Testis (tissue), 5 donors: ENCODE measurements at regions of chr17 and their contacts with region 1.

Region 1: DNA sequence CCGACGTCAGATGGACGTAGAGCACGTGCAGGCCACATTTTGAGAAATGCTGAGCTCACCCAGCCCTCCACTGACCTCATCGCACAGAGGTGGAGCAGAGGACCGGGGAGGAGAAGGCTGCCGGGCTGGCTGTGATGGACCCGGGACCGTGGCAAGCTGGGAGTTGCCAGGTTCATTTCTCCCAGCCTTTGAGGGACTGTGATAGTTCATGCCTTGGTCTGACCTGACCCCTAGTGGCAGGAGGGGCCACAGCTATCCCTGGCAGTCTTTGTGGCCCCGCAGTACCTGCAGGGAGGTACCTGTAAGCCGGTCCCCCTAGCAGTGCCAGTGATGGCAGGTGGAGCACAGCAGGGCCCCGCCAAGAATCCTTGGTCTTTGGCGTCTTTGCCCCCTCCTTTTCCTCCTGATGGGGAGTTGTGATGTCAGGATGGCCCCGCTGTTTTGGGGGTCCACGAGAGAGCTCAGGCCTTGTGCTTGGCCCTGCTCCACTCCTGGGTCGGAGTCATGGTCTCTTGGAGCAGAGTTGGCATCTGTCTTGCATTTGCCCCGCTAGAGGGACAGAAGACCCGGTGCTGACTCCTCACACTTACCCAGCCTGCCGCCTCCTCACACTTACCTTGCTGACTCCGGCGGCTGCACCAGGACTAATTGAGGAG is 50.4 kb downstream of the OR1D5 start:
- DNase-seq: peak; percentile 74
- H3K4me3 ChIP-seq: no peak overlapping the region
- H3K27ac ChIP-seq: no peak overlapping the region
- H3K4me1 ChIP-seq: no peaks in the 10 kb centered on the region
- H3K27me3 ChIP-seq: no peaks in the 10 kb centered on the region
- CTCF ChIP-seq: peak; percentile 52 to 68 (median 61)
- POLR2A ChIP-seq: no peak

Region 2: GRCh38 chr17:2828397-2829038 is 184.5 kb before region 1 on chr17:
- intact Hi-C with region 1: loop called (anchors 5 kb)
- DNase-seq: peak; percentile 73
- H3K4me3 ChIP-seq: no peak overlapping the region
- H3K27ac ChIP-seq: no peak overlapping the region
- H3K4me1 ChIP-seq: no peaks in the 10 kb centered on the region
- H3K27me3 ChIP-seq: no peaks in the 10 kb centered on the region
- CTCF ChIP-seq: peak; percentile 68 to 91 (median 85)
- POLR2A ChIP-seq: no peak